H1 (cell line): ENCODE measurements at regions of chr2 and their contacts with region 1.

Region 1: DNA sequence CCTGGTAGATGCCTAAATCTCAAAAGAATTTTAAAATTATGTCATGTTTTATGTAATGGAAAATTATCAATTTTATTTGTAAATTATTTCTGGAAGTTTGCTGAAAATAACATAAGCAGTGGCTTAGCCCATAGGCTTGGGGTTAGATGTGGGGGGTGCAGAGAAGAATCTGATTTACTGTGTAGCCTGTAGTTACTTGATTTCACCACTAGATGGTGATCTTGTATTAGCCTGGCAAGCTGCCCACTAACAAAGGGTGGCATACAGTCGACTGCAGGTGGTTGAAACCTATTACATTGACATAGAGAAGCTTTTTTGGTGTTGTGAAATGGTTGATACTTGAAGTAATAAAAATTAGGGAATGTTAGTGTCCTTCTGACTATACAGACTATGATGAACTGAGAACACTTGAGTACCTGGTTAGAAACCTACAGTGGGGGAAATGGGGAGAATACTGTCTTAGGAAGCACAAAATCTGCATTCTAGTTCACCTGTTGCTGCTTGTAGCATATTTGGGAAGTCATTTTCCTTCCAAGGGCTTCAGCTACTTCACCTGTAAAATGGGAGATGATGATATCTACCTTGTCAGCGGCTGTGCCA is 191.0 kb upstream of the LHCGR start:
- DNase-seq: no peak
- H3K4me3 ChIP-seq: no peak overlapping the region
- H3K27ac ChIP-seq: no peak overlapping the region
- H3K4me1 ChIP-seq: no peaks in the 10 kb centered on the region
- H3K27me3 ChIP-seq: no peaks in the 10 kb centered on the region
- CTCF ChIP-seq: peak in 2 of 3 experiments; percentile 82 to 90; a peak in 3 of 4 replicates
- EP300 ChIP-seq: no peak
- POLR2A ChIP-seq: no peak
- RAD21 ChIP-seq: peak; percentile 99 to 100

Region 2: GRCh38 chr2:48600204-48600813 is 346.2 kb before region 1 on chr2:
- CTCF ChIA-PET with region 1: interaction called, 10 read pairs
- POLR2A ChIA-PET with region 1: no interaction called
- DNase-seq: no peak
- H3K4me3 ChIP-seq: no peak overlapping the region
- H3K27ac ChIP-seq: no peak overlapping the region
- H3K4me1 ChIP-seq: no peaks in the 10 kb centered on the region
- H3K27me3 ChIP-seq: no peaks in the 10 kb centered on the region
- CTCF ChIP-seq: peak in 2 of 3 experiments; percentile 61 to 65; a peak in 2 of 4 replicates
- EP300 ChIP-seq: no peak
- POLR2A ChIP-seq: no peak
- RAD21 ChIP-seq: peak; percentile 88 to 89

Region 3: DNA sequence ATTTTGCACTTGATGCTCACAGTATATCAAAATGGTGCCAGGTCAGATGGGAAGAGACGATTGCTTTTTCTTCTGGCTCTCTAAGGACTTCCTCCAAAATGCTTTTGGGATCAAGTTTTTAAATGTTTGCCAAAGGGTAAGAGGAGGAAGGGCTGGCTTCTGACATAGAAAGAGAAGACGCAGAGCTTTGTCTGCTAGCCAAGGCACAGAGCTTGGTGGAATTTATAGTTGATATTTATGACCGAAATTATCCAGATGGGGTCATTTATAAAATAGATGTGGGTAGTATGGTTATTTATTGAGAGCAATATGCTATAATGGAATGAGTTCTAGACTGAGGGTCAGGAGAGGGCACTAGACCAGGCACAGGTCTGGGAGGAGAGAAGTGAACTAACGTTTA is 14.5 kb after region 1 on chr2:
- CTCF ChIA-PET with region 1: interaction called, 15 read pairs
- POLR2A ChIA-PET with region 1: no interaction called
- DNase-seq: no peak
- H3K4me3 ChIP-seq: no peak overlapping the region
- H3K27ac ChIP-seq: no peak overlapping the region
- H3K4me1 ChIP-seq: peaks cover 0 to 4% (median 0%) of the 10 kb centered on the region in 4 experiments; a peak in 1 of 7 replicates
- H3K27me3 ChIP-seq: no peaks in the 10 kb centered on the region; a peak in 1 of 7 replicates
- CTCF ChIP-seq: no peak
- EP300 ChIP-seq: no peak
- POLR2A ChIP-seq: no peak
- RAD21 ChIP-seq: no peak

Region 4: DNA sequence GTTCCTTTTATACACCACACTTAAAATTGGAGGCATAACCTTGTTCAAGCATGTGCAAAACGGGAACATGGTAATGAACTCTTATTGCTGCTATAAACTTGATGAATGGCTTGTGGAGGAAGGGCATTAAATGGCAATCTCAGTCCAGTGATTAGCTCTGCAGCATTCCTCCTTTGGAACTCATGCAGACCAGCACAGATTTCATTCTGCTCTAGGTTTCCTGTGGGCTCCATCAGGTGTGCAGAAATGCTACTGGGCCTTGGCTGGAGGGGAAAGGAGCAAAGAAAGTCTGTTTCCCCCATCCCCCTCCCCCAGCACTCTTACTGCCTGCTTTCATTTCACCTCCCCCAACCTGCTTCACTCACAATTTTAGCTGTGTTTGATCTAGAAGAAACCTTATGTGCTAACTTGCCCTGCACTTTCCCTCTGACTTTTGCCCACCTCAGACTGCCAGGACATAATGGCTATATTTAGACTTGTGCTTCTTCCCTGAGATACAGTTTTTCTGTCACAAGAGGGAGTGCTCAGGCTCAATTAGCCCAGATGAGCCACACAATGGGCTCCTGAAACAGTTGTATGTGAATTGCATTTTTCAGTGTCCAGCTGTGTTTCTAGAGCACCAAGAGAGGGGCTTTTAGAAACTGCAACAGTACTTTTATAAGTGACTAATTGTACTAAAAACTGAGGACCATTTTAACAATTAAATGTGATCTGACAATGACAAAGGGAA is 98.0 kb after region 1 on chr2:
- CTCF ChIA-PET with region 1: interaction called, 13 read pairs
- POLR2A ChIA-PET with region 1: no interaction called
- DNase-seq: no peak
- H3K4me3 ChIP-seq: no peak overlapping the region
- H3K27ac ChIP-seq: no peak overlapping the region
- H3K4me1 ChIP-seq: peaks cover 0 to 6% (median 3%) of the 10 kb centered on the region in 4 experiments; a peak in 4 of 7 replicates
- H3K27me3 ChIP-seq: no peaks in the 10 kb centered on the region
- CTCF ChIP-seq: peak in 2 of 3 experiments; percentile 59 to 62; a peak in 3 of 4 replicates
- EP300 ChIP-seq: no peak
- POLR2A ChIP-seq: no peak
- RAD21 ChIP-seq: peak; percentile 69 to 75

Region 5: GRCh38 chr2:49490710-49491109 is 544.2 kb after region 1 on chr2:
- CTCF ChIA-PET with region 1: interaction called, 12 read pairs
- POLR2A ChIA-PET with region 1: no interaction called
- DNase-seq: peak; percentile 66 to 84
- H3K4me3 ChIP-seq: no peak overlapping the region
- H3K27ac ChIP-seq: no peak overlapping the region
- H3K4me1 ChIP-seq: no peaks in the 10 kb centered on the region
- H3K27me3 ChIP-seq: no peaks in the 10 kb centered on the region
- CTCF ChIP-seq: peak; percentile 80 to 93 (median 88)
- EP300 ChIP-seq: no peak
- POLR2A ChIP-seq: no peak
- RAD21 ChIP-seq: peak; percentile 86